IMR-90 (cell line): ENCODE measurements at regions of chr14 and their contacts with region 1.

Region 1: GRCh38 chr14:45916322-45916953 is 663.4 kb upstream of the MIS18BP1 start:
- DNase-seq: no peak
- ATAC-seq: no peak
- H3K4me3 ChIP-seq: no peak overlapping the region
- H3K27ac ChIP-seq: no peak overlapping the region
- H3K4me1 ChIP-seq: no peaks in the 10 kb centered on the region
- H3K27me3 ChIP-seq: no peaks in the 10 kb centered on the region
- CTCF ChIP-seq: no peak
- POLR2A ChIP-seq: no peak
- RAD21 ChIP-seq: no peak

Region 2: GRCh38 chr14:46137786-46138185 is 221.3 kb after region 1 on chr14:
- CTCF ChIA-PET with region 1: no interaction called
- POLR2A ChIA-PET with region 1: no interaction called
- dilution Hi-C with region 1: no loop called
- in situ Hi-C with region 1: no loop called
- intact Hi-C with region 1: loop called (anchors 10 kb)
- DNase-seq: no peak
- ATAC-seq: no peak
- H3K4me3 ChIP-seq: no peak overlapping the region
- H3K27ac ChIP-seq: no peak overlapping the region
- H3K4me1 ChIP-seq: no peaks in the 10 kb centered on the region
- H3K27me3 ChIP-seq: no peaks in the 10 kb centered on the region
- CTCF ChIP-seq: no peak
- POLR2A ChIP-seq: no peak
- RAD21 ChIP-seq: no peak